ENCODE measurements at regions of chr14 and their contacts with region 1.

Region 1: GRCh38 chr14:56474419-56475022 is 105.1 kb upstream of the TMEM260 start:
- DNase-seq: peak in 1 of 5 donors; percentile 27
- H3K4me3 ChIP-seq: no peak overlapping the region
- H3K4me3 Mint-ChIP-seq: no peak overlapping the region
- H3K27ac ChIP-seq: no peak overlapping the region
- H3K27ac Mint-ChIP-seq: no peak overlapping the region
- H3K4me1 ChIP-seq: no peaks in the 10 kb centered on the region
- H3K4me1 Mint-ChIP-seq: no peaks in the 10 kb centered on the region
- H3K27me3 ChIP-seq: no peaks in the 10 kb centered on the region
- H3K27me3 Mint-ChIP-seq: peaks cover 3 to 27% of the 10 kb centered on the region in 2 donors

Region 2: DNA sequence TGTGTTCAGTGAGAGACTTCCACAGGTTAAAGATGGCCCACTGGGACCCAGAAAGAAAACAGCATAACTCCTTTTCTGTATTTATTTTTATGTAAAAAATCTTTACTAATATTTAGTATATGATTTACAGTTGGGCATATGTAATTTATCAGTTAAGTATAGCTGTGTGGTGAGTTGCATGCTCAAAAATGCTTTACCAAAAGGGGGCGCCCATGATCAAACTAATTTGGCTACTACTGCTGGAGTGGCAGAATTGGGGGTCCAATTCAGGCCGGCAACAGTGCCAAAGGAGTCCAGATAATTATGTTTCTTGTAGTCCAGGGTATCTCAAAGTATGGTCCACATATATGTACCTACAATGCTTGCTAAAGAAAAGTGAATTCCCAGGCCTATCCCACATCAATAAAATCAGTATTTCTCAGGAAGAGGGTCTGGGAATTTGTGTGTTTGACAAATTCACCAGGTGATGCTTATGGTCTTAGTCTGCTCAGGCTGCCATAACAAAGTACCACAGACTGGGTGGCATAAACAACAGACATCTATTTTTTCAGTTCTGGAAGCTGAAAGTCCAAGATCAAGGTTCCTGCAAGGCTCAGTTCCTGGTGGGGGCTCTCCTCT is 742.5 kb before region 1 on chr14:
- CTCF ChIA-PET with region 1: interaction called, 19 read pairs
- POLR2A ChIA-PET with region 1: no interaction called
- DNase-seq: peak; percentile 26 to 53 (median 31)
- H3K4me3 ChIP-seq: no peak overlapping the region
- H3K4me3 Mint-ChIP-seq: peak overlapping the region in 1 of 7 donors; percentile 30
- H3K27ac ChIP-seq: no peak overlapping the region
- H3K27ac Mint-ChIP-seq: peak overlapping the region in 3 of 8 donors; percentile 27 to 47 (median 29)
- H3K4me1 ChIP-seq: no peaks in the 10 kb centered on the region
- H3K4me1 Mint-ChIP-seq: peaks cover 0 to 16% (median 0%) of the 10 kb centered on the region in 3 donors
- H3K27me3 ChIP-seq: no peaks in the 10 kb centered on the region
- H3K27me3 Mint-ChIP-seq: peaks cover 7 to 12% of the 10 kb centered on the region in 2 donors

Region 3: GRCh38 chr14:56390859-56391258 is 83.7 kb before region 1 on chr14:
- CTCF ChIA-PET with region 1: no interaction called
- POLR2A ChIA-PET with region 1: no interaction called
- DNase-seq: no peak
- H3K4me3 ChIP-seq: no peak overlapping the region
- H3K4me3 Mint-ChIP-seq: no peak overlapping the region
- H3K27ac ChIP-seq: no peak overlapping the region
- H3K27ac Mint-ChIP-seq: no peak overlapping the region
- H3K4me1 ChIP-seq: no peaks in the 10 kb centered on the region
- H3K4me1 Mint-ChIP-seq: no peaks in the 10 kb centered on the region
- H3K27me3 ChIP-seq: no peaks in the 10 kb centered on the region
- H3K27me3 Mint-ChIP-seq: peaks cover 8 to 13% of the 10 kb centered on the region in 2 donors

Region 4: GRCh38 chr14:56461276-56462275 is 12.9 kb before region 1 on chr14:
- CTCF ChIA-PET with region 1: interaction called, 11 read pairs
- POLR2A ChIA-PET with region 1: no interaction called
- DNase-seq: no peak
- H3K4me3 ChIP-seq: no peak overlapping the region
- H3K4me3 Mint-ChIP-seq: no peak overlapping the region
- H3K27ac ChIP-seq: no peak overlapping the region
- H3K27ac Mint-ChIP-seq: no peak overlapping the region
- H3K4me1 ChIP-seq: no peaks in the 10 kb centered on the region
- H3K4me1 Mint-ChIP-seq: no peaks in the 10 kb centered on the region
- H3K27me3 ChIP-seq: no peaks in the 10 kb centered on the region
- H3K27me3 Mint-ChIP-seq: peaks cover 9 to 42% of the 10 kb centered on the region in 2 donors

Region 5: DNA sequence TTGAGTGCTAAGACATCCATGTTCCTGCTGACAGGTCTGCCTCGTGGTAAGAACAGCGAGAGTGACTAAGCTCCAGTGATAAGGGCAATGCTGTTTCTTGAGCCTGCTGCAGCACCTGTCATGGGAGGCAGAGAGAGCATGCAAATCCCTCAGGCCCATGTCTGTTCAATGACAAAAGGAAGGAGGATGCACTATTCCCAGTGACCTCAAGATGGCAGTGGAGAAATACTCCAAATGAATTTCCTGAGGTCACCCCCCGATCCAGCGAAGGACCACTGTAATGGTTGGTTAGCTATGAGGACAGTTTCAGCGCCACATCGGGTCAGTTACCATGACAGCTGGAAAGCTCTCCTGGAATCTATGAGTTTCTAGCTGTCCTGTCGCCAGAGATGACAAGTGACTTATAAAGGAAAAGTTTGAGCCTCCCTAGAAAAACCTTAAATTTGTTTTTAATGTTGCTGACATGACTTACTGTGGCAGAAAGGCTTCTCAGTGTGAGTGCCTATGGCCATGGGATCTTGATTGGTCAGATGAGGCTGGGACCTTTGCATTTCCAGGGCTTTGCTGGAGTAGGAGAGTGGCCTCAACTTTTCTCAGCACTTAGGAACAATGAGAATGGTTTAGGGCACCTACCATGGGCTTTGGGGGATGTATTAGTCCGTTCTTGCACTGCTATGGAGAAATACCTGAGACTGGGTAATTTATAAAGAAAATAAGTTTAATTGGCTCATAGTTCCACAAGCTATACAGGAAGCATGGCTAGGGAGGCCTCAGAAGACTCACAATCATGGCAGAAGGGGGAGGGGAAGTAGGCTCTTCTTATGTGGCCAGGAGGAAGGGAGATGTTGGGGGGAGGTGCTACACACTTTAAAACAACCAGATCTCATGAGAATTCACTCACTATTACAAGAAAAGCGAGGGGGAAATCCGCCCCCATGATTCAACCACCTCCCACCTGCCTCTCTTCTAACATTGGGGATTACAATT is 17.1 kb after region 1 on chr14:
- CTCF ChIA-PET with region 1: interaction called, 10 read pairs
- POLR2A ChIA-PET with region 1: no interaction called
- DNase-seq: peak in 2 of 5 donors; percentile 11 to 25
- H3K4me3 ChIP-seq: no peak overlapping the region
- H3K4me3 Mint-ChIP-seq: peak overlapping the region in 1 of 7 donors; percentile 49
- H3K27ac ChIP-seq: no peak overlapping the region
- H3K27ac Mint-ChIP-seq: peak overlapping the region in 1 of 8 donors; percentile 74
- H3K4me1 ChIP-seq: no peaks in the 10 kb centered on the region
- H3K4me1 Mint-ChIP-seq: peaks cover 5 to 10% (median 7%) of the 10 kb centered on the region in 3 donors
- H3K27me3 ChIP-seq: no peaks in the 10 kb centered on the region
- H3K27me3 Mint-ChIP-seq: peaks cover 2 to 14% of the 10 kb centered on the region in 2 donors

Measured in CD8-positive, alpha-beta memory T cell (primary cell).